ENCODE measurements at regions of chrX and their contacts with region 1.

Region 1: DNA sequence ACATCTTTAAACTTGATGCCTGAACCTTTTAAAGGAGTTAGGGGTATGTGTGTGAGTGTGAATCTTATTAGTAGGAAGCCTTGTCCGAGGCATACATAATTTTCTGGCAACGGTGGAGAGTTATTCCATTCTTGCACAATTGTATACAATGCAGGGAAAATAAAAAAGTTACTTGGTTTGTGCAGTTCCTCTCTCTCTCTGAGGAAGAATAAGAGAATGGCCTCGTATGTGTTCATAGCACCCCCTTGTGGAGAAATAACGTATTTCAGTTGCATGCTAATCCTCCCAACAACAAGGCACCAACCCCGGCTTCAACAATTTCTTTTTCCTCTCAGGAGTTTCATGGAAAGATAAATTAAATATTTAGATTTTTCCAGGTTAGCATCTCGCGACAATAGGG is 33.7 kb upstream of the FGF13 start:
- DNase-seq: peak in 1 of 2 experiments; percentile 46
- H3K4me3 ChIP-seq: no peak overlapping the region
- H3K4me3 Mint-ChIP-seq: no peak overlapping the region
- H3K27ac Mint-ChIP-seq: no peak overlapping the region
- H3K4me1 ChIP-seq: no peaks in the 10 kb centered on the region
- H3K4me1 Mint-ChIP-seq: no peaks in the 10 kb centered on the region
- H3K27me3 ChIP-seq: no peaks in the 10 kb centered on the region
- H3K27me3 Mint-ChIP-seq: no peaks in the 10 kb centered on the region
- CTCF ChIP-seq: peak; percentile 24 to 44

Region 2: DNA sequence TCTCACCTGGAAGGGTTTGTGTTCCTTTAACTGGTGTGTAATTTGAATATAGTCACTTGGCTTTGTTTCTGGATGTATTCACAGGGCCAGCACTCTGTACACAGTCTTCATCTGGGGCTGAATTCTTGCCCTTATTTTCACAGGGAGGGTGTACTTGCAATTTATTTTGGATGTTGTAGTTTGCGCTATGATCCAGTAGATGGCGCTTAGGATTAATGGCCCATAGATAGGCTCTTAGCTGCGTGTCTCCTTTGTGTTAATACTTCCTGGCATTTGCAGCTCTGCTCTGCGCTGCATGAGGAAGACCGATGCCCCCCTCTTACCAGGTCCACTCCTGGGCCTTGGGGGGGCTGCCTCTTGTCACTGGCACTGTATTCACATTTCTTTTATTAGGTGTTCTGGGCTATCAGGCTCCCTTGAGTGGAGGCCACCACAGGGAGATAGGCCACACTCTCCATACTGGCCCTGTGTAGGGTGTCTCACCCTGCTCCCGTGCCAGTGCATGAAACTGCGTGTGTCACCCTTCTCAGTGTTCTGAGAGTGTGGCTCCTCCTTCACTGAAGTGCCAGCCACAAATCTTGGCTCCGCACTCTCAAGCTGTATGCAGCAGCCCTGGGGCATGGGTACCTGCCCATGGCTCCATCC is 617.0 kb before region 1 on chrX:
- CTCF ChIA-PET with region 1: no interaction called
- POLR2A ChIA-PET with region 1: no interaction called
- intact Hi-C with region 1: loop called (anchors 1 kb)
- DNase-seq: peak in 1 of 2 experiments; percentile 17
- H3K4me3 ChIP-seq: no peak overlapping the region
- H3K4me3 Mint-ChIP-seq: no peak overlapping the region
- H3K27ac Mint-ChIP-seq: no peak overlapping the region
- H3K4me1 ChIP-seq: no peaks in the 10 kb centered on the region
- H3K4me1 Mint-ChIP-seq: no peaks in the 10 kb centered on the region
- H3K27me3 ChIP-seq: no peaks in the 10 kb centered on the region
- H3K27me3 Mint-ChIP-seq: peaks cover 13% of the 10 kb centered on the region
- CTCF ChIP-seq: peak in 1 of 2 experiments; percentile 56

Region 3: GRCh38 chrX:138191998-138192397 is 553.2 kb before region 1 on chrX:
- CTCF ChIA-PET with region 1: no interaction called
- POLR2A ChIA-PET with region 1: no interaction called
- intact Hi-C with region 1: loop called (anchors 1 kb)
- DNase-seq: peak in 1 of 2 experiments; percentile 16
- H3K4me3 ChIP-seq: no peak overlapping the region
- H3K4me3 Mint-ChIP-seq: no peak overlapping the region
- H3K27ac Mint-ChIP-seq: no peak overlapping the region
- H3K4me1 ChIP-seq: no peaks in the 10 kb centered on the region
- H3K4me1 Mint-ChIP-seq: no peaks in the 10 kb centered on the region
- H3K27me3 ChIP-seq: no peaks in the 10 kb centered on the region
- H3K27me3 Mint-ChIP-seq: no peaks in the 10 kb centered on the region
- CTCF ChIP-seq: peak; percentile 13 to 42

Region 4: DNA sequence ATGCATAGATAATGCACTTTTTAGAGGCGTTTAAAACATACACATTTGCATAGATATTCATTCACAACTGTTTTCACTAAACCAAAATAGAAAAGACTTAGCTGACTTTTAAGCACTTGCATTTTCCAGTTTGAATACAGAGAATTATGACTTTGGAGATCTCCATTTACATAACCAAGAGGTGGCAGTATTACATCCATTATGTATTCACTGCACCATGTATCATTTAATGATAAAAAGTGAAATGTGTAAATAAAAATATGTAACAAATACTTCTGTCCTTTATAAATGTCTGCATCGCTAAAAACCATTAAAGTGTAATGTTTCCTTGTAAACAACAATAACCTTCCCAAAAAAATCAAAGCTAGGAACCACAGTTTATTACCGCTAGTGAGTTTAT is 446.9 kb before region 1 on chrX:
- CTCF ChIA-PET with region 1: no interaction called
- POLR2A ChIA-PET with region 1: no interaction called
- intact Hi-C with region 1: loop called (anchors 1 kb)
- DNase-seq: no peak
- H3K4me3 ChIP-seq: no peak overlapping the region
- H3K4me3 Mint-ChIP-seq: no peak overlapping the region
- H3K27ac Mint-ChIP-seq: no peak overlapping the region
- H3K4me1 ChIP-seq: no peaks in the 10 kb centered on the region
- H3K4me1 Mint-ChIP-seq: no peaks in the 10 kb centered on the region
- H3K27me3 ChIP-seq: no peaks in the 10 kb centered on the region
- H3K27me3 Mint-ChIP-seq: no peaks in the 10 kb centered on the region
- CTCF ChIP-seq: no peak

Region 5: DNA sequence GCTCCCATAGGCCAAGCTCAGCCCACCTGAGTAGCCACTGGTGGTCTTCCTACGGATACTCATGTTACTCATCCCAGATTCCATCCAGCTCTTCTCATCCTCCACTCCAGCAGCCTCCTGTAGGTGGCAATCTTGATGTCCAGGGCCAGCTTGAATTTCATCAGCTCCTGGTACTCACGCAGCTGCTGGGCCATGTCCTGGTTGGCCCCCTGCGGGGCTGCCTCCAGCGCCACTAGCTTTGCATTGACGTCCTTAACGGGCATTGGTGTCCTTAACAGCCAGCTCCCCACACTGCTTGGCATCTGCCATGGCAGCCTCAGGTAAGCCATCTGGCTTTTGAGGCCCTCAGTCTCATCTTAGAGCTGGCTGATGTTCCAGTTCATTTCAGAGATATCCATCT is 257.4 kb before region 1 on chrX:
- CTCF ChIA-PET with region 1: no interaction called
- POLR2A ChIA-PET with region 1: no interaction called
- intact Hi-C with region 1: loop called (anchors 10 kb)
- DNase-seq: no peak
- H3K4me3 ChIP-seq: no peak overlapping the region
- H3K4me3 Mint-ChIP-seq: no peak overlapping the region
- H3K27ac Mint-ChIP-seq: no peak overlapping the region
- H3K4me1 ChIP-seq: no peaks in the 10 kb centered on the region
- H3K4me1 Mint-ChIP-seq: no peaks in the 10 kb centered on the region
- H3K27me3 ChIP-seq: no peaks in the 10 kb centered on the region
- H3K27me3 Mint-ChIP-seq: no peaks in the 10 kb centered on the region
- CTCF ChIP-seq: no peak

Region 6: DNA sequence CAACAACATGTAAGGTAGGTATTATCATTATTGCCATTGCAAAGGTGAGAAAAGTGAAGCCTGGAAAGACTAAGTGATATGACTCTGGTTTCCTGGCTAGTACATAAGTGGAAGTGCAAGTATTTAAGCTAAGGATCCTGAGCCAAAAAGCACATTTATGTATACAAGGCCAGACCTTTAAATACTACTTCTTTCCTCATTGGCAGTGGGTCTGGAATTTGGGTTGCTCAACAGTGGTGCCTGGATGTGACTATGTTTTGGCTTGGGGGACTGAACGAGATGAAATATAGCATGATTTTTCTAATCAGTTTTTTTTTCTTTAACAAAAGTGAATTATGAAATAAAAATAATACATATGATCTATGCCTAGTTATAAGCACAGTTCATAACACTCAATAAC is 26.3 kb before region 1 on chrX:
- CTCF ChIA-PET with region 1: no interaction called
- POLR2A ChIA-PET with region 1: no interaction called
- intact Hi-C with region 1: no loop called
- DNase-seq: no peak
- H3K4me3 ChIP-seq: no peak overlapping the region
- H3K4me3 Mint-ChIP-seq: no peak overlapping the region
- H3K27ac Mint-ChIP-seq: no peak overlapping the region
- H3K4me1 ChIP-seq: no peaks in the 10 kb centered on the region
- H3K4me1 Mint-ChIP-seq: no peaks in the 10 kb centered on the region
- H3K27me3 ChIP-seq: no peaks in the 10 kb centered on the region
- H3K27me3 Mint-ChIP-seq: no peaks in the 10 kb centered on the region
- CTCF ChIP-seq: no peak

Region 7: DNA sequence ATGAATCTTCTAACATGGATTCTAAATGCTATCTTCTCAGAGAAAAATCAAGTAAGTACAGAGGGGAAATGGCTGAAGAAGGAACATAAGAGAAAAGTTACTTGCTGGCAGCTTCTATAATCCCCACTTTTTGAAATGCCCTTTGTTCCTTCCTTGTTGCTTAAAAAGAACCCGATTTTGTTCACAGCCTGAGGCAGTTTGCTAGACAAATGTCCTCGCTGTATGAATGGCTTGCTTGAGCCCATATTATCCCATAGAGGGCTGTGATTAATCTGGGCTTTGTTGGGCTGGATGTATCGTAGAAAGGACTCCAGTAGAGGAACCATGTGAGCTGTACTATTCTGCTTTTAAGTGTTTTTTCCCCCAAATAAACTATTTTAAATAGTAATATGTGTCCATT is 100.6 kb after region 1 on chrX:
- CTCF ChIA-PET with region 1: no interaction called
- POLR2A ChIA-PET with region 1: no interaction called
- intact Hi-C with region 1: no loop called
- DNase-seq: no peak
- H3K4me3 ChIP-seq: no peak overlapping the region
- H3K4me3 Mint-ChIP-seq: no peak overlapping the region
- H3K27ac Mint-ChIP-seq: no peak overlapping the region
- H3K4me1 ChIP-seq: no peaks in the 10 kb centered on the region
- H3K4me1 Mint-ChIP-seq: no peaks in the 10 kb centered on the region
- H3K27me3 ChIP-seq: no peaks in the 10 kb centered on the region
- H3K27me3 Mint-ChIP-seq: no peaks in the 10 kb centered on the region
- CTCF ChIP-seq: no peak